ENCODE measurements at regions of chr3 and their contacts with region 1.

Region 1: DNA sequence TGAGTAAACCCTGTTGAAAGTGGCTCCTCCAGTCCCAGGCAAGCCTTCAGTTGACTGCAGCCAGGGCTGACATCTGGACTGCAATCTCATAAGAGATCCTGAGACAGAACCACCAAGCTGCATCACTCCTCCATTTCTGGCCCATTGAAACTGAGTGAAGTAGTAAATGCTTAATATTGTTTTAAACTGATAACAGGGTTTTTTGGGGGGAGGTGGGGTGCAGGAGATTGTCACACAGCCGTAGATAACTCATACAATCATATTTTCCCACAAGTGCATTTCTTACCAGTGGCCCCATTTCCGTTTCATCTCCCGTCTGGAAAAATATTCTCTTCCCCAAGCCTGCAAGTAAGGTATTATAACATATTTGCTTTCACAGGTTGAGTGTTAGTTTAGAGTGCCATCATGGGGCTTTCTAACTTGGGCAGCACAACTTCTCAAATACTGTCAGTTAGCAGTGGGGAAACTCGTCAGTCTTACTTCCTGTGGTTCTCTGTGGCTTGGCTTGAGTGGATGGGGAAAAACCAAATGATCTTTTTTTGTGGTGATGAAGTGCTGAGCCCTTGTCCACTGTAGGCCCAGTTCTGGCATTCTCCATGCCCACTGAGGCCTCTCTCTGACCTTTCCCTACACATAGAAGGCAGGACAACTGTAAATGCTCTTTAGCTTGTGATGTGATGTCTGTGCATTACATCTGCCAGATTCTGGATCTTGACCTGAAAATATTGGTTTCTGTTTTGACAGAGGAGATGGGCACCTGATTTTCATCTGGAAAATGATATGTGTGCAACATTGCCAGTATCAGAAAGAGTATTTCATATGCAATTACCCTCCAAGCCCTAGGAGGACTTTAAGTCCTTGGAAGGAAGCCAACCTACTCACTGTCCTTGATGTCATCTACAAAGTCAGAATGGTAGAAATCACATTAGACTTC is 90.1 kb upstream of the BHLHE40 start:
- DNase-seq: peak; percentile 44 to 77
- ATAC-seq: peak; percentile 88 to 98 (median 94)
- H3K4me3 ChIP-seq: no peak overlapping the region
- H3K4me3 Mint-ChIP-seq: peak overlapping the region; percentile 36
- H3K27ac ChIP-seq: peak overlapping the region; percentile 60
- H3K27ac Mint-ChIP-seq: peak overlapping the region; percentile 85 to 87
- H3K4me1 ChIP-seq: peaks cover 18% of the 10 kb centered on the region
- H3K4me1 Mint-ChIP-seq: peaks cover 16 to 17% of the 10 kb centered on the region in 2 donors
- H3K27me3 ChIP-seq: no peaks in the 10 kb centered on the region
- H3K27me3 Mint-ChIP-seq: no peaks in the 10 kb centered on the region
- CTCF ChIP-seq: no peak

Region 2: DNA sequence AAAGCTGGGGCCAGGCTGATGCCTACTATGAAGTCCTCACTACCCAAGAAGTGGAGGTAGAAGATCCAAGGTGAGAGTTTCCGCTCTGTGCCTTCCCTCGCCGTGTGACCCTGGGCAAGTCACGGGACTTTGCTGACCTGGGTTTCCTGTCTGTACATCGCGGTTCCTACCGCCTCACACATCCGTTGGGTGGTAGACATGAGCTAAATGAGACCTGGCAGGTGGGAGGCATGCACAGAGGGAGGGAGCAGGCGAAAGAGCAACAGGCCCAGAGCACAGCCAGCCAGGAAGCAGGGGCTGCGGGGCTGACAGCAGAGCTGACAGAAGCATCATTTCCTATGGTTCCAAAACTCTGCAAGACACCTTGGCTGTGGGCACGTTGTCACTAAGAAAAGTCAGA is 67.2 kb before region 1 on chr3:
- intact Hi-C with region 1: loop called (anchors 2 kb)
- DNase-seq: peak; percentile 71 to 95
- ATAC-seq: peak; percentile 88 to 97 (median 93)
- H3K4me3 ChIP-seq: no peak overlapping the region
- H3K4me3 Mint-ChIP-seq: peak overlapping the region; percentile 76
- H3K27ac ChIP-seq: peak overlapping the region; percentile 58
- H3K27ac Mint-ChIP-seq: peak overlapping the region; percentile 59 to 97
- H3K4me1 ChIP-seq: peaks cover 47% of the 10 kb centered on the region
- H3K4me1 Mint-ChIP-seq: peaks cover 51 to 69% of the 10 kb centered on the region in 2 donors
- H3K27me3 ChIP-seq: no peaks in the 10 kb centered on the region
- H3K27me3 Mint-ChIP-seq: no peaks in the 10 kb centered on the region
- CTCF ChIP-seq: no peak

Region 3: DNA sequence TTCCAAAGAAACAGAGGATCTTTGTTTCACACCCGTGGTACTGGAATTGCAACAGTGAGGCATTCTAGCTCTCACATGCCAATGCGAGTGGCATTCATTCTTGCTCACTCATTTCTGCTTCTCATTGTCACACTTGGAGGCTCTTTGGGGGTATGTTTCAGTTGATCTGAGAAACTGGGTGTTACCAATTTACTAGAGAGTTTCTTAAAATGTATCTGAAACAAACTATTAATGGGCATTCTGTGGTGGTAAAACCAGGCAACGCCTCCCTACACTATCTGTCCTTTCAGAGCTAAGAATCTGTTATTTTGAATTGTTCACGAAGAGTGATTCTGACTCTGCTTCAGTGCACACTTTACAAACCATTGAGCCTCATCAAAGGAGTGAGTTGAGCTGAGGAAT is 50.6 kb before region 1 on chr3:
- intact Hi-C with region 1: no loop called
- DNase-seq: no peak
- ATAC-seq: no peak
- H3K4me3 ChIP-seq: no peak overlapping the region
- H3K4me3 Mint-ChIP-seq: no peak overlapping the region
- H3K27ac ChIP-seq: no peak overlapping the region
- H3K27ac Mint-ChIP-seq: no peak overlapping the region
- H3K4me1 ChIP-seq: peaks cover 25% of the 10 kb centered on the region
- H3K4me1 Mint-ChIP-seq: peaks cover 44 to 47% of the 10 kb centered on the region in 2 donors
- H3K27me3 ChIP-seq: no peaks in the 10 kb centered on the region
- H3K27me3 Mint-ChIP-seq: no peaks in the 10 kb centered on the region
- CTCF ChIP-seq: no peak

Region 4: GRCh38 chr3:4850928-4851265 is 38.3 kb before region 1 on chr3:
- intact Hi-C with region 1: loop called (anchors 1 kb)
- DNase-seq: peak in 1 of 2 donors; percentile 84
- ATAC-seq: peak; percentile 82 to 86 (median 83)
- H3K4me3 ChIP-seq: no peak overlapping the region
- H3K4me3 Mint-ChIP-seq: peak overlapping the region; percentile 42
- H3K27ac ChIP-seq: peak overlapping the region; percentile 98
- H3K27ac Mint-ChIP-seq: peak overlapping the region; percentile 79 to 96
- H3K4me1 ChIP-seq: peaks cover 39% of the 10 kb centered on the region
- H3K4me1 Mint-ChIP-seq: peaks cover 72 to 75% of the 10 kb centered on the region in 2 donors
- H3K27me3 ChIP-seq: no peaks in the 10 kb centered on the region
- H3K27me3 Mint-ChIP-seq: no peaks in the 10 kb centered on the region
- CTCF ChIP-seq: no peak

Region 5: DNA sequence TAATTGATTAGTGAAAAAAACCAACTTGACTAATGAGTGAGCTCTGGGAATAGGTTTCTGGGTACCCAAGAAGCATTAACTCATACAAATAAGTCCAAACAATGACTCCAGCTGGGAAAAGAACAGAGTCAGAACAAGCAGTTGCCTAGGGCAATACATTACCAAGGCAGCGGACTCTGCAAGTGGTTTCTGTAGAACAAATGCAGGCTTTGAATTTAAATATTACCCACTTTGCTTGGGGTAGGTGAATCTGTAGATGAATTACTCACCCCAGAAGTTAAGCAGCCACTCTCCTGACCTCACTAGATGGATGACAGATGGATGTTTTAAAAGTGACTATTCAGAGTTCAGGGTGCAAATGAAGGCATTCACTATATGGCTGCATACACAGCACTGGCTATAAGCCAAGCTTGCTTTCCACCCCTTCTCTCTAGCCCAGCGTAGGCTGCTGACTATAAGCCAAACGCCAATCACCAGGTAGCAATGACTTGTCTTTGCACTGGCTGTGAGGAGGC is 17.0 kb after region 1 on chr3:
- intact Hi-C with region 1: loop called (anchors 1 kb)
- DNase-seq: no peak
- ATAC-seq: peak in 1 of 3 donors; percentile 27
- H3K4me3 ChIP-seq: no peak overlapping the region
- H3K4me3 Mint-ChIP-seq: peak overlapping the region; percentile 85
- H3K27ac ChIP-seq: no peak overlapping the region
- H3K27ac Mint-ChIP-seq: peak overlapping the region; percentile 90 to 95
- H3K4me1 ChIP-seq: peaks cover 35% of the 10 kb centered on the region
- H3K4me1 Mint-ChIP-seq: peaks cover 52 to 65% of the 10 kb centered on the region in 2 donors
- H3K27me3 ChIP-seq: no peaks in the 10 kb centered on the region
- H3K27me3 Mint-ChIP-seq: no peaks in the 10 kb centered on the region
- CTCF ChIP-seq: no peak

Measured in natural killer cell (primary cell).